Heart right ventricle (tissue), 16 donors: ENCODE measurements at regions of chr18 and their contacts with region 1.

Region 1: GRCh38 chr18:23231340-23232021 is 96.2 kb downstream of the CABLES1 start:
- DNase-seq: peak; percentile 43 to 77
- ATAC-seq: peak; percentile 72 to 89 (median 78)
- H3K4me3 ChIP-seq: no peak overlapping the region
- H3K27ac ChIP-seq: peak overlapping the region in 9 of 10 donors; percentile 47 to 88 (median 75)
- H3K4me1 ChIP-seq: peaks cover 9 to 61% (median 42%) of the 10 kb centered on the region in 9 donors
- H3K27me3 ChIP-seq: no peaks in the 10 kb centered on the region
- CTCF ChIP-seq: no peak

Region 2: DNA sequence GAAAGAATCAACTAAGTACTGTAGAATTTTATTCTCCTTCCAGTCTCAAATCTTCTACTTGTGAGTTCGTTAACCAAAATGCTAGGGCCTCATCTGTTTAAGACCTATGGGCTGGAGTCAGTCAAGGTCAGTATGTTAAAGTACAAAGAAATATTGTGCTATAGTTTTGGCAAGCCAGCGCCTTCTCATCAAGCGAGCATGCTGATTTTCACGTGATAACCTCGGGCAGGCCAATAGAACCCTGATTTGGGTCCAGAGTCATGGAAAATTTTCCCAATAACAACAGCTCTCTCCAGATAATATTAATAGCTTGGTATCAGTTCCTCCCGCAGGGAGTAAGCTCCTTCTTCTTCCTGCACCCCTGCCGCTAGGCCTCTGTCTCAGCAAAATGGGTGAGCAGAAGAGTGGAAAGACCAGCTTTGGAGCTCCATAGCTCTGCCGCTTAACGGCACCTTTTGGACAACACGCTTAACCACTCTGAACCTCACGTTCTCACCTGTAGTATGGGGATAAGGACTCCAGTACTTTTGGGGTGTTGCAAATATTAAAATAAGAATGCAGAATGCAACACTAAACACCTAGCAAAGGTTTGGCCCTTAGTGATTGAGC is 84.5 kb before region 1 on chr18:
- intact Hi-C with region 1: loop called in 1 of 10 experiments (anchors 5 kb)
- DNase-seq: no peak
- ATAC-seq: peak in 2 of 8 donors; percentile 7 to 27
- H3K4me3 ChIP-seq: no peak overlapping the region
- H3K27ac ChIP-seq: peak overlapping the region in 6 of 10 donors; percentile 4 to 30 (median 21)
- H3K4me1 ChIP-seq: peaks cover 0 to 27% (median 16%) of the 10 kb centered on the region in 9 donors
- H3K27me3 ChIP-seq: peaks cover 0 to under 1% (median 0%) of the 10 kb centered on the region in 7 donors
- CTCF ChIP-seq: no peak

Region 3: DNA sequence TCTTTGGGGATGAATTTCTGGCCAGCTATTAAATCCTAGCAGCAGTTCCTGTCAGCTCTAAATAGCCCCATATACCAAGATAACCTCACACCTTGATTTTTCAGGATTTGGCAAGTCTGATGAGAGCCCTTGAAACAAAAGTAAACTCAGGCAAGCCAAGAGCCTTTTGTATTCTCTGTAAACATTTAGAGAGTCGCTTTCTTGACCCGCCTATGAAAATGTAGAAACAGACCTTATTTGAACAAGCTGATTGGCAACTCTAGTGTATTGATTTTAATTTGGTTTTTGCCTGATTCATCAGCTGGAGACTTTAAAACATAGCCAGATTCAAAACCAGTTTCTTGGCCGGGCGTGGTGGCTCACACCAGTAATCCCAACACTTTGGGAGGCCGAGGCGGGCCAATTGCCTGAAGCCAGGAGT is 52.8 kb before region 1 on chr18:
- intact Hi-C with region 1: loop called in 1 of 10 experiments (anchors 10 kb)
- DNase-seq: no peak
- ATAC-seq: no peak
- H3K4me3 ChIP-seq: no peak overlapping the region
- H3K27ac ChIP-seq: no peak overlapping the region
- H3K4me1 ChIP-seq: peaks cover 0 to 21% (median 2%) of the 10 kb centered on the region in 9 donors
- H3K27me3 ChIP-seq: no peaks in the 10 kb centered on the region
- CTCF ChIP-seq: no peak

Region 4: GRCh38 chr18:23189768-23190661 is 41.5 kb before region 1 on chr18:
- intact Hi-C with region 1: no loop called
- DNase-seq: no peak
- ATAC-seq: peak in 4 of 8 donors; percentile 33 to 67 (median 44)
- H3K4me3 ChIP-seq: no peak overlapping the region
- H3K27ac ChIP-seq: no peak overlapping the region
- H3K4me1 ChIP-seq: peaks cover 0 to 37% (median 25%) of the 10 kb centered on the region in 9 donors
- H3K27me3 ChIP-seq: no peaks in the 10 kb centered on the region
- CTCF ChIP-seq: no peak

Region 5: GRCh38 chr18:23365602-23366001 is 134.1 kb after region 1 on chr18:
- intact Hi-C with region 1: no loop called
- DNase-seq: peak in 1 of 2 donors; percentile 23
- ATAC-seq: peak in 7 of 8 donors; percentile 71 to 94 (median 76)
- H3K4me3 ChIP-seq: no peak overlapping the region
- H3K27ac ChIP-seq: peak overlapping the region in 8 of 10 donors; percentile 23 to 72 (median 38)
- H3K4me1 ChIP-seq: peaks cover 0 to 22% (median 8%) of the 10 kb centered on the region in 9 donors
- H3K27me3 ChIP-seq: no peaks in the 10 kb centered on the region
- CTCF ChIP-seq: no peak